ENCODE measurements at regions of chr3 and their contacts with region 1.

Region 1: DNA sequence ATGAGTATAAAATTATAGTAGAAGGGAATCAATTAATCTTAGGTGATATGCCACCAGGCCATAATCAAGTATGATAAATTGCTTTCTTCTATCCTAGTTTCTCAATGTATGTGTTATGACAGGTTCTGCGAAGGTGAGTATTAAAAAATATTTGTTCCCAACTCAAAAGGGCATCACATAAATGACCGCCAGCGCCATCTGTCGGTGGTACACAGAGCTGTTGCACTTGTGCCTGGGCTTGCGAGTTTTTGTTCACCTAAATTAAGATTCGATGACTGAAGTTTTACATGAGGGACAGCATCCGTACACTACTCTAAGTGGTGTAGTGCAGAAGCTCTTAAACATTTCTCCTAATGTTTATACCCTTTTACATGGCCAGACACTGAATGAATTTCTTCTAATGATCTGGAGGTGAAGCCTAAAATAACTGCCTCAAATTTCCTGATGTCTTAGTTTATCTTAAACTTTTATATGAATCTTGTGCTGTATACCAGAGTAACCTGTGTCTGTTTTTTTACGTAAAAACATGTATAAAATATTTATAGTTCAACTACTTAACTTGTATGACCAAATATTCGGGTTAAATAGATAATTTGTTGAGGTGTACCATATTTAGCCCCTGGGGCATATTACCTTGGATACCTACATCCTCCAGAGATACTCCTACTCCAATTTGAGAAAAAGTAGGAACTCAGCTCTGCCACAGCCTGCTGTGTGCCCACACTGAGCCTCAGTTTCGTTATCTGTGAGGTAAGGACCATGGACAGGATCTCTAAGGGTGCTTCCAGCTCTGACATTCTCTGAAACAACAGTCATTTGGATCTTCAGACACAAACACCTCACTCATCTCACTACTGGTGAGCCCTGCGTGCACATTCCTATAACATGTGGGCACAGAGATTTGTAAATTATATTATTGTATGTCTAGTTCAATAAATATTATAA is 365.6 kb downstream of the MAGI1 start:
- DNase-seq: peak; percentile 43 to 86 (median 69)
- H3K4me3 ChIP-seq: no peak overlapping the region
- H3K27ac ChIP-seq: no peak overlapping the region
- H3K4me1 ChIP-seq: no peaks in the 10 kb centered on the region
- H3K27me3 ChIP-seq: no peaks in the 10 kb centered on the region
- CTCF ChIP-seq: peak; percentile 48 to 83 (median 69)
- POLR2A ChIP-seq: no peak

Region 2: DNA sequence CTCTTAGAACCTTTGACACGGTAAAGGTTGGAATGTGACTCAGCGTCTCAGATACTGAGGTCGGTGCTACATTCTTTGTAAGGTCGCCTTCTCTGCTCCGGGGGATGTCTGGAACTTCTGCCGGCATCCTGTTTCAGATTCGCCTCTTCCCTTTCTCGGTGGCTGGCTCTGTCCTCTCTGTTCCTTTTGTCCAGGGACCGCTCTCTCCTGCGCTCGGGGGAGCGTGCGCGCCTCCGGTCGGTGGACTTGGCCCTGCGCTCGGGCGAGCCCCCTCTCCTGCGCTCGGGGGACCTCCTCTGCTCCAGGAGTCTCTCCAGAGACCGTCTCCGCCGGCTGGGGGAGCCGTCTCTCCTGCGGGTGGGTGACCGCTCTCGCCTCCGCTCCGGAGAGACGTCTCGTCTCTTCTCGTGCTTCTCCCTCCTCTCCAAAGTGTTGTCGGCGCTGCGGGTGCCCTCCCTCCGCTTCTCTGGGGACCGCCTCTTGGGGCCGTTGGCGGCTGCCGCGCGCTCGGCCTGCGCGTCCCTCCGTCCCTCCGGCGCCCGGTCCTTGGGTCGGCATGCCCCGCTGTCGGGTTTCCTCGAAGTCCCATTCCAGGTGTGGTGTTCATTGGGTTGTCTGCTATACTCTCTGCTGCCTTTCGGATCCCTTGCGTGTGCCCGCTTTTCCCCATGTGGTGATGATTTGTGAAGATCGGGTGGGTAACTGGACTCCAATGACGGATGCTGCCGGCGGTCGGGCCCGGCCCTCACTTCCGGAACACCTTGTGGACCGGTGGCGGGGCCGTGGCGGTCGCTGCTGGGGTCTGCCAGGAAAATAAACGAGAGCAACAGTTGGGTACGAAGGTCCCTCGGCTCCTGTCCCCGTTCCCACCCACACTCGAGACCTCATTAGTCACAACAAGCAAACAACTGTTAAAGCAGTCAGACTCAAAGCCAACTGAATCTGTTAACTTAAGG is 316.5 kb before region 1 on chr3:
- intact Hi-C with region 1: loop called in 1 of 2 experiments (anchors 10 kb)
- DNase-seq: peak in 1 of 7 donors; percentile 20
- H3K4me3 ChIP-seq: peak overlapping the region in 1 of 4 donors; percentile 23
- H3K27ac ChIP-seq: no peak overlapping the region
- H3K4me1 ChIP-seq: no peaks in the 10 kb centered on the region
- H3K27me3 ChIP-seq: no peaks in the 10 kb centered on the region
- CTCF ChIP-seq: no peak
- POLR2A ChIP-seq: no peak

Region 3: GRCh38 chr3:65733459-65733858 is 60.3 kb after region 1 on chr3:
- intact Hi-C with region 1: no loop called
- DNase-seq: no peak
- H3K4me3 ChIP-seq: no peak overlapping the region
- H3K27ac ChIP-seq: no peak overlapping the region
- H3K4me1 ChIP-seq: peaks cover 6 to 19% of the 10 kb centered on the region in 2 donors
- H3K27me3 ChIP-seq: no peaks in the 10 kb centered on the region
- CTCF ChIP-seq: no peak
- POLR2A ChIP-seq: no peak

Measured in adrenal gland (tissue), 19 donors.